ENCODE measurements at regions of chr3 and their contacts with region 1.

Region 1: GRCh38 chr3:158659454-158660237 is 12.8 kb downstream of the LXN start:
- DNase-seq: peak; percentile 41
- ATAC-seq: peak; percentile 54
- H3K4me3 ChIP-seq: no peak overlapping the region
- H3K4me3 Mint-ChIP-seq: no peak overlapping the region
- H3K27ac ChIP-seq: no peak overlapping the region
- H3K27ac Mint-ChIP-seq: no peak overlapping the region
- H3K4me1 ChIP-seq: no peaks in the 10 kb centered on the region
- H3K4me1 Mint-ChIP-seq: no peaks in the 10 kb centered on the region
- H3K27me3 ChIP-seq: no peaks in the 10 kb centered on the region
- H3K27me3 Mint-ChIP-seq: no peaks in the 10 kb centered on the region
- CTCF ChIP-seq: peak; percentile 71

Region 2: DNA sequence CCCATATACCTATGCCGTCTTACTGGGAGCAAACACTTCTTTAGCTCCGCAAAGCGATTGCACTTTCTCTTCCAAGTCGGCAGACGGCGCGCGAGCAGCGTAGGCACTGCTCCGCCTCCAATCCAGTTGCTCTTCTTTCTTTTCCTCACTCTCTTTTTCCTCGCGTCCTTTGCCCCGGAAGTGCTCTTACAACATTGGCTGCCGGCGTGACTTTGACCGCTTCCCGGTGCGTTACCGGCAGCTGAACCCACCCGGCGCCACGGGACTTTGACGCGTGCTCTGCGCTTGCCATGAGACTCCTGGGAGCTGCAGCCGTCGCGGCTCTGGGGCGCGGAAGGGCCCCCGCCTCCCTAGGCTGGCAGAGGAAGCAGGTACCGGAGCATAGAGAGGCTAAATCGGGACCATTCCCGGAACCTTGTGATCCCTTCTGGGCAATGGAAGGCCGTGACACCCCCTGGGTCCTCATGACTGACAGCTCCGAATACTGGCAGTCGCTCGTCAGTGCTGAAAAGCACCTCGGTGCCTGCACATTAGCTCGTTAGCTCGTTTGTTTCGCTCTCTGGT is 15.2 kb before region 1 on chr3 and contains the start of gene GFM1:
- CTCF ChIA-PET with region 1: interaction called, 31 read pairs
- POLR2A ChIA-PET with region 1: no interaction called
- intact Hi-C with region 1: no loop called
- DNase-seq: peak; percentile 94
- ATAC-seq: peak; percentile 96
- H3K4me3 ChIP-seq: peak within 1 kb of the TSS; percentile 75 to 96 (median 91)
- H3K4me3 Mint-ChIP-seq: peak within 1 kb of the TSS; percentile 99
- H3K27ac ChIP-seq: peak within 1 kb of the TSS; percentile 63 to 85
- H3K27ac Mint-ChIP-seq: peak within 1 kb of the TSS; percentile 78
- H3K4me1 ChIP-seq: peaks cover 4 to 11% of the 10 kb centered on the region in 2 donors
- H3K4me1 Mint-ChIP-seq: peaks cover 22% of the 10 kb centered on the region
- H3K27me3 ChIP-seq: no peaks in the 10 kb centered on the region
- H3K27me3 Mint-ChIP-seq: no peaks in the 10 kb centered on the region
- CTCF ChIP-seq: peak; percentile 84
- total RNA-seq, gene GFM1: 46.0 and 46.8 TPM in 2 replicates

Region 3: DNA sequence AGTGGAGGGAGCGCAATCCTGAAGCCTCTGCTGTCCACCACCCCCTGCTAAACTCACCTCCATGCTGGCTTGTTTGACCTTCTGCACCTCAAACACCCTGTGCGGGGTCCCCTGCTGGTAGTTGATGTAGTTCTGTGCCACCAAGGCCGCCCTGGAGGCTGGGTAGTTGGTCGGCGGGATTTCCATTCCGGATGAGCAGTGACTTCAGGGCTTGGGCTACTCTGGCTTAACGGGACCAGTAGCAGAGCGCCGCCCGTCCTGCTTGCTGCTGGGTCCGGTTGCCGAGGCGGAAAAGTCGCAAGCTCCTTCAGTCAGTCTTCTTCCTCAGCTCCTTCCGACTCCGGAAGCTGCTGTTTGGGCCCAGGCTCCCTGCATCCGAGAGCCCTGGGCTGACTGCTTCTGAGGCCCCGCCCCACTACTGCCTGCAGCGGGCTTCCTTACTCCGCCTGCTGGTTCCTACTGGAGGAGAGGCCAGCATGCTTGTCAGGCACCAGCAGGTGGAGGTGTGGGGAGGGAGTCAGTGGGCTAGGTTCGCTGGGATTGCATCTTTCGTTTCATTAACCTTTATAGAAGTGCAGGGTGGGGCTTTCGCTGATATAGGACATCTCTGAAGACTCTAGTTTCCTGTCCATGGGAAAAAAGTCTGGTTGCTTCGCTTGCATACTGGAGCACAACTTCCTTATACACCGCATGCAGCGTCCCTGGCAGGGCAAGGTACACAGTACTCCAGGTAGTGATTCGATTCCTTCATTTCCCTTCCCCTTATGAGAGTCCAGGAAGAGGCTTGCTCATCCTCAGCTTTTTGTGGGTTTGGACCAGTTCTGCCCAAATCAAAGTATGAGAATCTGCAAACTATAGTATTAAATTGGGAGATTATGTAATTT is 12.9 kb after region 1 on chr3 and contains the start of gene LXN:
- CTCF ChIA-PET with region 1: interaction called, 10 read pairs
- POLR2A ChIA-PET with region 1: no interaction called
- intact Hi-C with region 1: loop called (anchors 1 kb)
- DNase-seq: peak; percentile 78
- ATAC-seq: peak; percentile 97
- H3K4me3 ChIP-seq: peak within 1 kb of the TSS; percentile 58 to 80 (median 76)
- H3K4me3 Mint-ChIP-seq: peak within 1 kb of the TSS; percentile 96
- H3K27ac ChIP-seq: peak within 1 kb of the TSS; percentile 44 to 58
- H3K27ac Mint-ChIP-seq: peak within 1 kb of the TSS; percentile 92
- H3K4me1 ChIP-seq: peaks cover 11 to 12% of the 10 kb centered on the region in 2 donors
- H3K4me1 Mint-ChIP-seq: peaks cover 25% of the 10 kb centered on the region
- H3K27me3 ChIP-seq: no peaks in the 10 kb centered on the region
- H3K27me3 Mint-ChIP-seq: no peaks in the 10 kb centered on the region
- CTCF ChIP-seq: peak; percentile 48
- total RNA-seq, gene LXN: 5.1 and 7.9 TPM in 2 replicates

Region 4: GRCh38 chr3:158679547-158680000 is 19.9 kb after region 1 on chr3:
- CTCF ChIA-PET with region 1: interaction called, 10 read pairs
- POLR2A ChIA-PET with region 1: no interaction called
- intact Hi-C with region 1: no loop called
- DNase-seq: no peak
- ATAC-seq: no peak
- H3K4me3 ChIP-seq: no peak overlapping the region
- H3K4me3 Mint-ChIP-seq: no peak overlapping the region
- H3K27ac ChIP-seq: no peak overlapping the region
- H3K27ac Mint-ChIP-seq: no peak overlapping the region
- H3K4me1 ChIP-seq: no peaks in the 10 kb centered on the region
- H3K4me1 Mint-ChIP-seq: no peaks in the 10 kb centered on the region
- H3K27me3 ChIP-seq: no peaks in the 10 kb centered on the region
- H3K27me3 Mint-ChIP-seq: no peaks in the 10 kb centered on the region
- CTCF ChIP-seq: no peak

Measured in B cell (primary cell).